Heart right ventricle (tissue), 16 donors: ENCODE measurements at regions of chr5 and their contacts with region 1.

Region 1: DNA sequence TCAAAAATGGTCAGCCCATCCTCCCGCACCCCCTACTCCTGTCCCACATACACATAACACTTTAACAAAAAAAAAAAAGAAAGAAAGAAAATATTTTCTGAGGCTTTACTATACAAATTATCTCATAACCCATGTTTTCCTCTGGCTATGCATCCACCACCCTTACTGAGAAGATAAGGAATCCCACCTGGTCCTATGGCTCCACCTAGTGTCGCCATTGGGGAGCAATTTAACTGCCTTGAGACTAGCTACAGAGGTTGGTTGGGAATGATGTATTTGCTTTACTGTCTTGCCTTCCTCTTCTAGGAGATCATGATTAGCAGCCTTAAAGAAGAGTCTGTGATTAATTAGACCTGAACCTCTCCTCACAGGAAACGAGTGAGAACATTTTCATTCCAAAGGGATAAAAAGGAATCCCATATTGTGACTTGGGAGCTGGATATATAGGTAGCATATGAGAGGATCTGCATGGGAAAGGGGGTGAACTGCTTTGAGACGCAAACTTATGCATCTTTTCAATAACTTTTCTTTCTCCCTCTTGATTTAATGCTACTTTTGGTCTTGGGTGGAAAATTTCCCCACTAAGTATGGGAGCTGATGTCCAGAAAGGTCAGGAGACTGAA is 77.7 kb upstream of the SELENOP start:
- DNase-seq: peak; percentile 36 to 80
- ATAC-seq: peak; percentile 71 to 94 (median 91)
- H3K4me3 ChIP-seq: no peak overlapping the region
- H3K27ac ChIP-seq: no peak overlapping the region
- H3K4me1 ChIP-seq: no peaks in the 10 kb centered on the region
- H3K27me3 ChIP-seq: no peaks in the 10 kb centered on the region
- CTCF ChIP-seq: peak; percentile 83 to 96 (median 90)

Region 2: GRCh38 chr5:41869739-41870626 is 1019.4 kb before region 1 on chr5 and contains the start of gene OXCT1:
- intact Hi-C with region 1: loop called in 1 of 10 experiments (anchors 10 kb)
- DNase-seq: peak; percentile 75 to 83
- ATAC-seq: peak; percentile 74 to 90 (median 85)
- H3K4me3 ChIP-seq: peak within 1 kb of the TSS; percentile 48 to 85 (median 77)
- H3K27ac ChIP-seq: peak within 1 kb of the TSS; percentile 79 to 95 (median 92)
- H3K4me1 ChIP-seq: peaks cover 0 to 37% (median 23%) of the 10 kb centered on the region in 9 donors
- H3K27me3 ChIP-seq: no peaks in the 10 kb centered on the region
- CTCF ChIP-seq: no peak
- total RNA-seq, gene OXCT1: 93.2 to 340 (median 261) TPM

Region 3: DNA sequence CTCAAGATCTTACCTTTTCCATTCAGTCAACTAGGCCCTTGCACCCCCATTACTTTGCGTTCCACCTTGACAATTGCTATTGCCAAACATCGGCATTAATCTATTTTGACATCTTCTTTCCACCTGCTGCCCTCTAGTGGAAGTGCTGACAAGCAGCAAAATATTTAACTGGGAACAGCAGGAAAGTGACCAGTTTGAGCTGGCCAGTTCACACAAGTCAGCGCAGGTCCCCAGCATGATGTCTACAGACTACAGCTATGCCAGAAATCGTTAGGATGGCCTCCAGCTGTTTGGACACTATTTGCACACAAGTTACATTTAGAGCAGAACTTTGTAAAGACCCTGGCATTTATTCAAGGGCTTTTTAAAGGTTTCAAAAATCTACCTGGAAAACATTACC is 306.1 kb before region 1 on chr5:
- intact Hi-C with region 1: loop called in 2 of 10 experiments (anchors 10 kb)
- DNase-seq: peak; percentile 22 to 72
- ATAC-seq: peak in 6 of 8 donors; percentile 26 to 47 (median 38)
- H3K4me3 ChIP-seq: no peak overlapping the region
- H3K27ac ChIP-seq: no peak overlapping the region
- H3K4me1 ChIP-seq: peaks cover 0 to 48% (median 28%) of the 10 kb centered on the region in 9 donors
- H3K27me3 ChIP-seq: no peaks in the 10 kb centered on the region
- CTCF ChIP-seq: peak; percentile 68 to 87 (median 80)

Region 4: GRCh38 chr5:42691413-42691937 is 197.9 kb before region 1 on chr5:
- intact Hi-C with region 1: no loop called
- DNase-seq: peak; percentile 44 to 65
- ATAC-seq: peak; percentile 90 to 100 (median 98)
- H3K4me3 ChIP-seq: no peak overlapping the region
- H3K27ac ChIP-seq: peak overlapping the region in 2 of 10 donors; percentile 3 to 23
- H3K4me1 ChIP-seq: peaks cover 0 to 15% (median 0%) of the 10 kb centered on the region in 9 donors
- H3K27me3 ChIP-seq: no peaks in the 10 kb centered on the region
- CTCF ChIP-seq: peak in 1 of 9 donors; percentile 12

Region 5: GRCh38 chr5:42767491-42768105 is 121.8 kb before region 1 on chr5:
- intact Hi-C with region 1: loop called in 5 of 10 experiments (anchors 5 to 10 kb)
- DNase-seq: no peak
- ATAC-seq: peak in 1 of 8 donors; percentile 46
- H3K4me3 ChIP-seq: no peak overlapping the region
- H3K27ac ChIP-seq: no peak overlapping the region
- H3K4me1 ChIP-seq: peaks cover 0 to 6% (median 0%) of the 10 kb centered on the region in 9 donors
- H3K27me3 ChIP-seq: no peaks in the 10 kb centered on the region
- CTCF ChIP-seq: peak in 8 of 9 donors; percentile 26 to 76 (median 60)